B cell (primary cell): ENCODE measurements at regions of chr19 and their contacts with region 1.

Region 1: DNA sequence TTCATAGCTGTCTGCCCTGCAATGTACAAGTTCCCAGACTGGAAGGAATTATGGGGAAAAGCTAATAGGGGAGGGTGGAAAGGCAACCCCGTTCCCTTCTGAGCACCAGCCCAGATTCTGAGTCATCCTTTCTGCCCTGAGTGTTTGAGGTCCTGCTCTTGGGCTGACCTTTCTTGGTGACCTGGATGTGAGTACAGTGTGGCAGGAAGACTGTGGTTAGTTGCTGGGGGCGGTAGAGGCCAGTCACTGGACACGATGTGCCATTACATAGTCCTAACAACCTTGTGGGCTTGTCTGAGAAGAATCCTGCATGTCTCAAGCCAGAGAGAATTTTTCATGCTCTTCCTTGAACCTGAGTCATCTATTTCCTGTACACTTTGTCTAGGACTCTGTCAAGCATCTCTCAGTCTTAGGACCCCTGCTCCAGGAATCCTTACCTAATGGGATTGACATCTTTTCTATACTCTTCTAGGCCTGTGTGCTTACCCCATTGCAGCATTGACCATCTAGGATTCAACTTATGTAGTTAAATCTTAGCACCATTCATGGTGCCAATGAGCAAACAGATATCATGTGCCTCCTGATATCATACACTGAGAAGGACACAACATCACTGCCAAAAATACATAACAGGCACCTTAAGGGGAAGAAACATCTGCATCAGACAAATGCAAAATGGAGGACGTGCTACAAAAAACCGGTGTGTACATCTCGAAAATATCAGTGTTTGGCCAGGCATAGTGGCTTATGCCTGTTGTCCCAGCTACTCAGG is 8.1 kb upstream of the ANGPTL4 start:
- DNase-seq: no peak
- ATAC-seq: no peak
- H3K4me3 ChIP-seq: no peak overlapping the region
- H3K4me3 Mint-ChIP-seq: no peak overlapping the region
- H3K27ac ChIP-seq: no peak overlapping the region
- H3K27ac Mint-ChIP-seq: no peak overlapping the region
- H3K4me1 ChIP-seq: peaks cover 0 to 3% of the 10 kb centered on the region in 2 donors
- H3K4me1 Mint-ChIP-seq: peaks cover 3% of the 10 kb centered on the region
- H3K27me3 ChIP-seq: peaks cover 0 to 20% (median 4%) of the 10 kb centered on the region in 4 experiments
- H3K27me3 Mint-ChIP-seq: peaks cover 18% of the 10 kb centered on the region
- CTCF ChIP-seq: no peak

Region 2: GRCh38 chr19:8334458-8335342 is 21.1 kb before region 1 on chr19:
- CTCF ChIA-PET with region 1: interaction called, 10 read pairs
- POLR2A ChIA-PET with region 1: no interaction called
- intact Hi-C with region 1: no loop called
- DNase-seq: no peak
- ATAC-seq: peak; percentile 21
- H3K4me3 ChIP-seq: peak overlapping the region in 2 of 5 experiments; percentile 12 to 46
- H3K4me3 Mint-ChIP-seq: peak overlapping the region; percentile 34
- H3K27ac ChIP-seq: no peak overlapping the region
- H3K27ac Mint-ChIP-seq: no peak overlapping the region
- H3K4me1 ChIP-seq: peaks cover 5 to 16% of the 10 kb centered on the region in 2 donors
- H3K4me1 Mint-ChIP-seq: peaks cover 6% of the 10 kb centered on the region
- H3K27me3 ChIP-seq: peaks cover 0 to 37% (median 12%) of the 10 kb centered on the region in 4 experiments
- H3K27me3 Mint-ChIP-seq: peaks cover 21% of the 10 kb centered on the region
- CTCF ChIP-seq: no peak

Region 3: GRCh38 chr19:8340341-8341096 is 15.3 kb before region 1 on chr19:
- CTCF ChIA-PET with region 1: interaction called, 15 read pairs
- POLR2A ChIA-PET with region 1: no interaction called
- intact Hi-C with region 1: no loop called
- DNase-seq: no peak
- ATAC-seq: no peak
- H3K4me3 ChIP-seq: no peak overlapping the region
- H3K4me3 Mint-ChIP-seq: no peak overlapping the region
- H3K27ac ChIP-seq: no peak overlapping the region
- H3K27ac Mint-ChIP-seq: no peak overlapping the region
- H3K4me1 ChIP-seq: peaks cover 16 to 19% of the 10 kb centered on the region in 2 donors
- H3K4me1 Mint-ChIP-seq: peaks cover 17% of the 10 kb centered on the region
- H3K27me3 ChIP-seq: peaks cover 0 to 55% (median 15%) of the 10 kb centered on the region in 4 experiments
- H3K27me3 Mint-ChIP-seq: peaks cover 33% of the 10 kb centered on the region
- CTCF ChIP-seq: no peak

Region 4: DNA sequence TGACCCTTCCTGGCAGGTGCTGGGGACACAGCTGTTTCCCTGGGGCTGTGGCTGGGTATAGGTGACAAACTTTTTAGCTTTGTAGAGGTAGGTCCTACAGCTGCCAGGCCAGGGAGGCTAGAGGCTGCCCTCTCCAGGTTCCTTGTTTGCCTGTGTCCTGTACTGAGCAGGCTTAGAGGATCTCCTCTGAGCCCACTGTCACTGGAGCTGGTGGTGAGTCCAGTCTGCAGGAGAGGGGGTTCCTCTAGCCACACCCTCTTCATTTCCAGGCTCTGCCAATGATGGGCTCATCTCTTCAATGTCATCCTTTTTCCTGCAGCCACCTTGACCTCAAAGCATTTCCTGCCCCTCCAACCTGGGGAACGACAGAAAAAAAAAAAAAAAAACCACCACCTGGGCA is 21.8 kb after region 1 on chr19:
- CTCF ChIA-PET with region 1: interaction called, 13 read pairs
- POLR2A ChIA-PET with region 1: no interaction called
- intact Hi-C with region 1: no loop called
- DNase-seq: no peak
- ATAC-seq: no peak
- H3K4me3 ChIP-seq: no peak overlapping the region
- H3K4me3 Mint-ChIP-seq: no peak overlapping the region
- H3K27ac ChIP-seq: no peak overlapping the region
- H3K27ac Mint-ChIP-seq: no peak overlapping the region
- H3K4me1 ChIP-seq: no peaks in the 10 kb centered on the region
- H3K4me1 Mint-ChIP-seq: no peaks in the 10 kb centered on the region
- H3K27me3 ChIP-seq: no peaks in the 10 kb centered on the region
- H3K27me3 Mint-ChIP-seq: no peaks in the 10 kb centered on the region
- CTCF ChIP-seq: no peak

Region 5: DNA sequence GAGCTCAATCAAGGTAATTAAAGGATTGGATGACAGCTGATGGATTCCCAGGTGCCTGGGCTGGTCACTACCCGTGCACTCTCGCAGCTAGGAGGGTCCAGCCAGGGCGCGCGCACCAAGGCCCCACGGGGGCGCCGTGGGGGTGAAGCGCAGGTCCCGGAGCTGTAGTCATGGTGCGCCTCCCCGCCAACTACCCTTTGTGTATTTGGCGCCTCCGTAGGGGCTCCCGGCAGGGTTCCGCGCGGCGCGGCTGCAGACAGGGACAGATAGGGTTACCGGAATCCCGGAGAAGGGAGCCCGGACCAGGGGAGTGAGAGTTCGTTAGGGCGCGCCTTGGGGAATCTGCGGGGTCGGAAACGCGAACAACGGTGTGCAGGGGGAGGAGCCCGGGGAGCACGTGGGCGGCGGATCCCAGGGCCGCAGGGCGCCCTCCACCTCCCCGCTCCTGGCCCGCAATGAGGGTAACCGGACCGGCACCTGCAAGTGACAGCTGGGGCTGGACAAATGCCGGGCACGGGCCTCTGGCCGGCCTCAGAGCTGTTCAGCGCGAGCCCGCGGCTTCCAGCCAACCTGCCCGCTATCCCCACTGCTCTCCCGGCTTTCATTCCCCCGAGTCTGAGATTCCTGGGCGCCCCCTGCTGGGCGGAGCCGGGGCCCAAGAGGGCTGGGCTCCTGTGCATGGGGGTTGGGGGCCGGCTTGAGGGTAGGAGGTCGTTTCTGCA is 150.0 kb after region 1 on chr19:
- CTCF ChIA-PET with region 1: interaction called, 20 read pairs
- POLR2A ChIA-PET with region 1: interaction called, 3 read pairs
- intact Hi-C with region 1: loop called (anchors 1 kb)
- DNase-seq: peak; percentile 82
- ATAC-seq: peak; percentile 78
- H3K4me3 ChIP-seq: peak overlapping the region in 4 of 5 experiments; percentile 64 to 72 (median 68)
- H3K4me3 Mint-ChIP-seq: peak overlapping the region; percentile 93
- H3K27ac ChIP-seq: no peak overlapping the region
- H3K27ac Mint-ChIP-seq: peak overlapping the region; percentile 68
- H3K4me1 ChIP-seq: peaks cover 0 to 24% of the 10 kb centered on the region in 2 donors
- H3K4me1 Mint-ChIP-seq: peaks cover 9% of the 10 kb centered on the region
- H3K27me3 ChIP-seq: peaks cover 0 to 10% (median 2%) of the 10 kb centered on the region in 4 experiments
- H3K27me3 Mint-ChIP-seq: no peaks in the 10 kb centered on the region
- CTCF ChIP-seq: peak; percentile 73

Region 6: GRCh38 chr19:8641908-8642547 is 286.2 kb after region 1 on chr19:
- CTCF ChIA-PET with region 1: interaction called, 19 read pairs
- POLR2A ChIA-PET with region 1: no interaction called
- intact Hi-C with region 1: loop called (anchors 2 kb)
- DNase-seq: peak; percentile 44
- ATAC-seq: no peak
- H3K4me3 ChIP-seq: no peak overlapping the region
- H3K4me3 Mint-ChIP-seq: no peak overlapping the region
- H3K27ac ChIP-seq: no peak overlapping the region
- H3K27ac Mint-ChIP-seq: no peak overlapping the region
- H3K4me1 ChIP-seq: no peaks in the 10 kb centered on the region
- H3K4me1 Mint-ChIP-seq: no peaks in the 10 kb centered on the region
- H3K27me3 ChIP-seq: peaks cover 0 to 14% (median 0%) of the 10 kb centered on the region in 4 experiments
- H3K27me3 Mint-ChIP-seq: peaks cover 32% of the 10 kb centered on the region
- CTCF ChIP-seq: peak; percentile 68